ENCODE measurements at regions of chr20 and their contacts with region 1.

Region 1: DNA sequence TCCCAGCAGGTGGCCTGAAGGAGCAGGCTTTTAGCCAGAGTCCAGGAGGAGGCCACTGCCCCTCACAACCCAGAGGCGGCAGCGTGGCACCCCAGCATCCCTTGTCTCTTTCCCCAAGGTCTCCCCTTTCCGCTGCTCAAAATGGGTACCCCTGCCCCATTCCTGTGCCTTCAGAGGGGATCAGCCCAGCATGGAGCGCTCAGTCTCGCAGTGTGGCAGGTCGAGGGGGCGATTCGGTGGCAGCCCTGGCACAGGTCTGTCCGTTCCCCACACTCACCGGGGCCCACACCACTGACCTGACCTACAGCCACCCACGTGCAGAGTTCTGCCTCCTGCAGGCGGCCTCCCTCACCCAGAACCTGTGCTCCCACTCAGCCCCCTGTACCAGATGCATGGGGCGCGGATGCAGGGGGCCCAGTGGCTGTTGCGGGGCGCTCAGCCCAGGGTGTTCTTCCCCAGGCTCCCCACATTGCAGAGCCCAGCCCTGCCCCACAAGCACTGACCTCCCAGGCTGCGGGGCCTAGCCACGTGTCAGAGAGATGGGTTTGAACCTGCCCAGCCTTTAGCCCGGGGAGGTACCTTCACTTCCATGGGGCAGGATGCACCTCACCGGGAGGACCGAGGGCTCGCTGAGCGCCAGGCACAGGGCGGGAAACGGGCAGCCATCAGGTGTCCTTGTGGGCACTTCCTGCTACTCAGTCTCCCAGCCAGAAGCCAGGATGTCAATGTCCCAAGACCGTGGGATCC is 41.8 kb downstream of the DSTN start:
- DNase-seq: peak; percentile 53
- H3K4me3 ChIP-seq: no peak overlapping the region
- H3K27ac ChIP-seq: peak overlapping the region; percentile 61 to 86 (median 82)
- H3K4me1 ChIP-seq: peaks cover 29 to 70% (median 57%) of the 10 kb centered on the region in 4 donors
- H3K27me3 ChIP-seq: no peaks in the 10 kb centered on the region
- CTCF ChIP-seq: peak in 4 of 5 experiments; percentile 41 to 55 (median 44)
- EP300 ChIP-seq: no peak
- POLR2A ChIP-seq: no peak

Region 2: DNA sequence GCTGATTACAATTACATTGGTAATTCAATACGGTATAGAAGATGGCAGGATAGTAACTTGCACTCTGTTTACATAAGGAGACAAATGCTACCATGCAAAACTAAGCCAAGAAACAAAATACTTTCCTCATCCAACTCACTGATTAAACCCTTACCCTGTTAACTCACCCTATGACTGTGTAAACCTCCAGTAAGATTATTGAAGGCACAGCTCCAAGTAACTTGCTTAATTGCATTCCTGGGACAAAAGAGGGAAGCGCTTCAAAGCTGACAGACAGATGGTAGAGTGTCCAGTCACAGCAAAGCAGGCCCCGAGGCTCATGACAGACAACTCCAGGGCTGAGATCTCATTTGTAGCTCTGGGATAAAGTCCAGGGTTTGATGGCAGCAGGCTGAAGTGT is 1031.6 kb before region 1 on chr20:
- in situ Hi-C with region 1: no loop called
- intact Hi-C with region 1: no loop called
- DNase-seq: no peak
- H3K4me3 ChIP-seq: no peak overlapping the region
- H3K27ac ChIP-seq: peak overlapping the region; percentile 25 to 58 (median 32)
- H3K4me1 ChIP-seq: peaks cover 0 to 34% (median 18%) of the 10 kb centered on the region in 4 donors
- H3K27me3 ChIP-seq: no peaks in the 10 kb centered on the region
- CTCF ChIP-seq: no peak
- EP300 ChIP-seq: no peak
- POLR2A ChIP-seq: no peak

Region 3: GRCh38 chr20:17530716-17531664 is 80.7 kb before region 1 on chr20 and contains the start of gene BFSP1:
- in situ Hi-C with region 1: no loop called
- intact Hi-C with region 1: no loop called
- DNase-seq: peak; percentile 56
- H3K4me3 ChIP-seq: peak within 1 kb of the TSS; percentile 1 to 77 (median 52)
- H3K27ac ChIP-seq: peak within 1 kb of the TSS; percentile 61 to 82 (median 74)
- H3K4me1 ChIP-seq: peaks cover 11 to 22% (median 13%) of the 10 kb centered on the region in 4 donors
- H3K27me3 ChIP-seq: no peaks in the 10 kb centered on the region
- CTCF ChIP-seq: no peak
- EP300 ChIP-seq: no peak
- POLR2A ChIP-seq: no peak
- total RNA-seq, gene BFSP1: 0.75 to 1.00 (median 0.82) TPM in 3 of 4 donors, not detected in the other

Region 4: GRCh38 chr20:17569616-17570346 is 41.9 kb before region 1 on chr20 and contains the start of gene DSTN:
- in situ Hi-C with region 1: no loop called
- intact Hi-C with region 1: loop called (anchors 5 kb)
- DNase-seq: peak; percentile 94
- H3K4me3 ChIP-seq: peak within 1 kb of the TSS; percentile 85 to 97 (median 92)
- H3K27ac ChIP-seq: peak within 1 kb of the TSS; percentile 98 to 100 (median 98)
- H3K4me1 ChIP-seq: peaks cover 14 to 63% (median 54%) of the 10 kb centered on the region in 4 donors
- H3K27me3 ChIP-seq: no peaks in the 10 kb centered on the region
- CTCF ChIP-seq: no peak
- EP300 ChIP-seq: peak; percentile 27
- POLR2A ChIP-seq: peak; percentile 97
- total RNA-seq, gene DSTN: 280 to 589 (median 373) TPM

Region 5: GRCh38 chr20:17835240-17835935 is 223.7 kb after region 1 on chr20:
- in situ Hi-C with region 1: no loop called
- intact Hi-C with region 1: no loop called
- DNase-seq: peak; percentile 41
- H3K4me3 ChIP-seq: no peak overlapping the region
- H3K27ac ChIP-seq: peak overlapping the region; percentile 65 to 83 (median 74)
- H3K4me1 ChIP-seq: peaks cover 0 to 7% (median 0%) of the 10 kb centered on the region in 4 donors
- H3K27me3 ChIP-seq: no peaks in the 10 kb centered on the region
- CTCF ChIP-seq: no peak
- EP300 ChIP-seq: no peak
- POLR2A ChIP-seq: no peak

Measured in transverse colon (tissue), 4 donors.